ENCODE measurements at regions of chr2 and their contacts with region 1.

Region 1: GRCh38 chr2:158024288-158024898 is 77.3 kb upstream of the UPP2 start:
- DNase-seq: peak; percentile 74
- ATAC-seq: peak; percentile 71
- H3K4me3 ChIP-seq: no peak overlapping the region
- H3K27ac ChIP-seq: no peak overlapping the region
- H3K4me1 ChIP-seq: no peaks in the 10 kb centered on the region
- H3K27me3 ChIP-seq: no peaks in the 10 kb centered on the region
- CTCF ChIP-seq: peak; percentile 89

Region 2: DNA sequence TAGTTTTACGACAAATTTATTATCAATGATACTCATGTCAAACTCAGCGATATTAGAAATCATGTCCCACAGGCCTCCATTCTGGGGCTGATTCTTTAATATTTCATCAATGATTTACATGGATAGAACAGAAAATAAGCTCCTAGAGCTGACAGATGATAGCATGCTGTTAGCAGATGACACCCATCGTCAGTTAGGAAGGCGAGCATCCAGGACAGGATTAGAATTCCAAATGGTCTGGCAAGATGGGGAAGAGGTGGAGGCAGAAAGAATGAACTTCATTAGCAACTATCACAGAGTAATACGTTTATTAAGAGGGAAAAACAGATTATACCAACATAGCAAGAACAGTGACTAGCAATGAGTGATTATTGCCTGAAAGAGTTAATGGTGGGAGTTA is 102.1 kb before region 1 on chr2:
- CTCF ChIA-PET with region 1: no interaction called
- POLR2A ChIA-PET with region 1: no interaction called
- intact Hi-C with region 1: no loop called
- DNase-seq: no peak
- ATAC-seq: no peak
- H3K4me3 ChIP-seq: no peak overlapping the region
- H3K27ac ChIP-seq: no peak overlapping the region
- H3K4me1 ChIP-seq: no peaks in the 10 kb centered on the region
- H3K27me3 ChIP-seq: peaks cover 19% of the 10 kb centered on the region; the same call in 1 of the 2 replicates
- CTCF ChIP-seq: no peak

Region 3: GRCh38 chr2:157971697-157972096 is 52.7 kb before region 1 on chr2:
- CTCF ChIA-PET with region 1: no interaction called
- POLR2A ChIA-PET with region 1: no interaction called
- intact Hi-C with region 1: no loop called
- DNase-seq: peak; percentile 64
- ATAC-seq: no peak; the same call in 1 of the 2 replicates
- H3K4me3 ChIP-seq: no peak overlapping the region
- H3K27ac ChIP-seq: peak overlapping the region; percentile 55
- H3K4me1 ChIP-seq: peaks cover 12% of the 10 kb centered on the region
- H3K27me3 ChIP-seq: no peaks in the 10 kb centered on the region
- CTCF ChIP-seq: no peak

Region 4: GRCh38 chr2:158753641-158754611 is 729.5 kb after region 1 on chr2:
- CTCF ChIA-PET with region 1: interaction called, 4 read pairs
- POLR2A ChIA-PET with region 1: no interaction called
- intact Hi-C with region 1: loop called (anchors 2 kb)
- DNase-seq: peak; percentile 73
- ATAC-seq: peak; percentile 88
- H3K4me3 ChIP-seq: peak overlapping the region; percentile 32; the same call in 1 of the 2 replicates
- H3K27ac ChIP-seq: no peak overlapping the region
- H3K4me1 ChIP-seq: no peaks in the 10 kb centered on the region
- H3K27me3 ChIP-seq: no peaks in the 10 kb centered on the region
- CTCF ChIP-seq: peak; percentile 97